AG04449 (cell line): ENCODE measurements at regions of chr11 and their contacts with region 1.

Region 1: DNA sequence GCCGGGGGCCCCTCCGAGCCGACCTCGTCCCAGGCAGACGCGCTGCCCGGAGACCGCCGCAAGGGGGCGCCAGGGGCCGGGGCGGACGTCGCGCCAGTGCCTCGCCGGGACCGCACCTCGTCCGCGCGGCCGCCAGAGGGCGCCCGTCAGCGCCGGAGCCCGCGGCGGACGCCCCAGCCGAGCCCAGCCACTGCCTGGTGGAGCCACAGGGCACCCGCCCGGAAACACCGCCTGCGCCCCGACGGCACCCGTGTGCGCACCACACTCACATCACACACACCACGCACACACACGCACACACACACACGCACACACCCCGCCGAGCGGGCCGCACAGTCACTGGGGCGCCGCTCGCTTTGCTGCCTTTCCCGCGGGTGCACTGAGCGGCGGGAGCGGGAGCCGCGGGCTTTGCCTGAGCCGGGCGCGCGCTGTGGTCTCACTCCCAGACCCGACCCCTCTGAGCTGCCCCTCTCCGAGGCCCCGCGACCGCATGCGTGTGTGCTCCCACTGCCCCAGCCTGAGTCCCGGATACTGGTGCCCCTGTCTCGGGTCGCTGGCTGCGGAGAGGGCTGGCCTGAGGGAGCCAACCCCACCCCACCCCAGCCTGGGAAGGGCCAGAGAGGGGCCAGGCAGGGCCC is 449.3 kb downstream of the OPCML start:
- DNase-seq: no peak
- H3K4me3 ChIP-seq: peak overlapping the region; percentile 60
- CTCF ChIP-seq: peak; percentile 81

Region 2: DNA sequence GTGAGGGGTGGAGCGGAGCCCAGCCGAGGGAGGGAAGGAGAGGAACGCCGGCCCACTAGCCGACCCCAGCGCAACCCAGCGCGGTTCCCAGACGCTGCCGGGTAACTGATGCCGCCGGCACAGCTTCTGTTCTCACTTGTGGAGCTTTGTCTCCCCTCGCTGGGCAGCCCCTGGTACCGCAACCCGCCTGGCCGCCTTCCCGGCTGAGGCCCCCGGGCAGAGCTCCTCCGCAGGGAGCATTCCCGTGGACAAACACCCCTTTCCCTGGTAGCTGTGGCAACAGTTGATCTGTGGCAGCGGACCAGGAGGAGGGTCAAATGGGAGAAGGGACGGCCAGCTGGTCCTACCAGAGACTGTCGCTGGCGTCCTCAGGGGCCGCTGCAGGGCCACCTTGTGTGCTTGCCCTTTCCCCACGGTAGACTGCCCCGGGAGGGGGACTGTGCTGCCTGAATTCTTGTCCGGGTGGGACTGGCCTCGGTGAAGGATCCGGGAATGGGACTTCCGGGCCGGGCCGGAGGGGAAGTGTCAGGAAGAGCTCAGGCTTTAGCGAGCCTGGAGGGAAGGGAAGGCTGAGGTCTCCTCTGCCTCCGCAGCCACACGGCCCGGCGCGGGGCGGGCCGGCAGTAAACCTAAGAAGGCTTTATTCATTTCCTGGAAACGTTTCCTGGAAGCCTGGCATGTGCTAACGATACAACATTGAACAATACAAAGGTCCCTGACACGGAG is 18.7 kb before region 1 on chr11:
- CTCF ChIA-PET with region 1: interaction called, 83 read pairs
- POLR2A ChIA-PET with region 1: no interaction called
- DNase-seq: peak; percentile 23
- H3K4me3 ChIP-seq: peak overlapping the region; percentile 71
- CTCF ChIP-seq: peak; percentile 96

Region 3: DNA sequence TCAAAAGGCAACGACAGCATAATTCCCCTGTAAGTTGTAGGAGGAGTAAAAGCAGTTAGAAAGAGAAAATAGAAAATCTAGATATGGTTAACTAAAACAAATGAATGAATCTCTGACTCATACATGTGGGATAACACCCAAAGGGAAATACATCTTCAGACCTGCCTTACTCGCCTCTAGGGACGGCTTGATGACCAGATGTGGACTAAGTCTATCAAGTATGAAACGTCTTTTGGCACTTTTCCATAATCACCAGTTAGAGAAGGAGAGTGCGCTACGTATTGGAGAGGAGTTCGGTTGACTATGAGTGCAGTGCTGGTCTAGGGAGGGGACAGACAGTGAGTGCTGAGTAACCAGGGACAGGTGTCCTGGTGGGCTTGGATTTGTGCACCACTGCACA is 10.6 kb before region 1 on chr11:
- CTCF ChIA-PET with region 1: interaction called, 83 read pairs
- POLR2A ChIA-PET with region 1: no interaction called
- DNase-seq: no peak
- H3K4me3 ChIP-seq: no peak overlapping the region
- CTCF ChIP-seq: no peak

Region 4: GRCh38 chr11:133134314-133135173 is 51.6 kb after region 1 on chr11:
- CTCF ChIA-PET with region 1: interaction called, 10 read pairs
- POLR2A ChIA-PET with region 1: no interaction called
- DNase-seq: no peak
- H3K4me3 ChIP-seq: no peak overlapping the region
- CTCF ChIP-seq: peak; percentile 88

Region 5: DNA sequence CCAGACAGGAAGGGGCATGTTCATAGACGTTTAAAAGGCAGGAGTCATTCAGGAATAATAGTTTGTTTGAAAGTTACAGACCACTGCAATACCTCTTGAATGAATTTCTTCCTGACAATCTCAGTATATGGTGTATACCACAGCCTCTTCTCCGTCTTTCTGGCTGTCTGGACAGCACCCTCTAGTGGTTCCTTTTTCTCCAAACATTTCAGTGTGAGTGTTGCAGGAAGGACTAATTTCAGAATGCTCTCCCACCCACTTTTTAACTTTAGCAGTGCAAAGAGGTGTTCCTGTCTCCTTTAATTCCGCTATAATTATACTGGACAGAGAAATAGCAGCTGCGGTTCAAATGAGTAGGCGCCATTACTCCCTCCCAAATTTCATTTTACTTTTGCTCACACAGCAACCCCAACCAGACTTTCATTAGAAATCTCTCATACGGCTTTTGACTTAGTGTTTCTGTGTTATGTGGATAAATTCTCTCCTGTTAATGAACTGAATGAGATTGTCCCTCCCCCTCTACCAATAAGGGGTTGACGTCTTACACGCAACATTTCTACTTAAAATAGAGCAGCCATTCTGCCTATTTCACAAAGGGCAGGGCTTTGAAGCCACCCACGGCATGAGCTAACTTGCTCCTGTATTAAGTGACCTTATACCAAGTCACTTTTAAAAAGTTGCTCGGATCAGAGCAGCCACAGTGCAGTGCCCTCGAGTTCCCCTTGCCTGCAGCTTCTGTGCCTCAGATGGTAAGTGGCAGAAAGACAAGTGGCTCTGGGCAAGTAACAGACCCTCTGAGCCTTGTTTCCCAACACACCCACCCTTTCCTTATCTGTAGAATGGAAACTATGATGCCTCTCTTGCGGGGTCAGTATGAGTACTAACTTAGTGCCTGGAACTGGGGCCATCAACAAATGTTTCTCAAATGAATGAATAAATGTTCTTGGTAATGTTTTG is 80.8 kb after region 1 on chr11:
- CTCF ChIA-PET with region 1: interaction called, 167 read pairs
- POLR2A ChIA-PET with region 1: no interaction called
- DNase-seq: peak; percentile 17
- H3K4me3 ChIP-seq: no peak overlapping the region
- CTCF ChIP-seq: peak; percentile 67

Region 6: DNA sequence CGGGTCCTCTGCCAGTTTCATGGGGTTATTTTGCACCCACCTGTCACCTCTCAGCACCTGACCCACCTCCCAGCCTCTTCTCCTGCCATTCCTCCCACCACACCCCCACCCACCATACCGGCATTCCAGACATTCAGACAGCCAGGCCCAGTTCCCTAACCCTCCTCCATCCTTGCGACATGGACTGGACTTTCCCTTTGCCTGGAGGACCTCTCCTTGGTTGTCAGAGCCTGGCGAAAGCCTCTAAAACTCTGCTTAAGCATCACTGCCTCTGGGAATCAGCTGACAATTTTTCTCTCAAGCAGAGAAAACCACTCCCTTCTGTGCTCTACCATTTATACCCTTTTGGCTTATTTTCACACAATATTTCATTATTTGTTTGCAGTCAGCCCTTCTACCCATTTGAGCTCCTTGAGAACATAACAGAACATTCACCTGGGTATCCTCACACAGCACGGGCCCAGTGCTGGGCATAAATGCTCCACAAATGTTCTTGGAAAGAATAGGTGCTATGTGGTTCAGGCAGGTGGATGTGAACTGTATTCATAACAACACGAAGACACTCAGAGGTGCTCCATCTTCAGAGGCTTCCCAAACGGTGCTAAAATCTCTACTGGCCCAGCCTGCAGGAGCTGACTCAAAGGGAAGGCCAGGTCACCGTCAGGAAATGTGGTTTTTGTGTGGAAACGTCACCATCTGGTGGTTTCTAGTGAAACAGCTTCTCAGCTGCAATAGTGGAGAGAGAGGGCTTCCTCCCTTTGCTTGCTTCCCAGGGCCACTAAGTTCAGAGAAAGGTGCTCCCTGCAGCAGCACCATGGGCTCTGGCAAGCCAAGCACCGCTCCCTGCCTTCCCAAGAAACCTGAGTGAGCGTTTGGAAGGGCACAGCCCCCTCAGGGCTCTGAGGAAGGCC is 752.0 kb after region 1 on chr11:
- CTCF ChIA-PET with region 1: interaction called, 68 read pairs
- POLR2A ChIA-PET with region 1: interaction called, 4 read pairs
- DNase-seq: no peak
- H3K4me3 ChIP-seq: no peak overlapping the region
- CTCF ChIP-seq: peak; percentile 48